ENCODE measurements at regions of chr15 and their contacts with region 1.

Region 1: DNA sequence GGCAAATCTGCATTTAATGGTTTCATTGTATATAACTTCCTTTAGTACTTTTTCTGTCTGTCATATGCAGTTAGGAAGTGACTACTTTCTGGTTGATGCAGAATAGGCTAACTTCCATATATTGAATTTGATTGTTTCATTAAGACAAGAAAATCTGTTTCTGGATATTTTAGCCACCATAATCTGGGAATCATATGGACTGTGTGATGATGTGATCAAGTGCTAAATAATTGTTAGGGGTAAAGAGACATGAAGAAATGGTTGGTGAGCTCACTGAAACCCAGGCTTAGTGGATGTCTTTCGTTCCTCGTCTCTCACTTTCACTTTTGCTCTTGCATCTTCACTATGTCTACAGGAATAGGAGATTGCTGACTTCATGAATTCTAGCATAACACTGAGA is 3.5 kb upstream of the MNS1 start:
- DNase-seq: no peak
- ATAC-seq: peak; percentile 56
- H3K4me3 Mint-ChIP-seq: peak overlapping the region; percentile 68
- H3K27ac Mint-ChIP-seq: peak overlapping the region; percentile 52
- H3K4me1 Mint-ChIP-seq: peaks cover 27% of the 10 kb centered on the region
- H3K27me3 Mint-ChIP-seq: peaks cover 23% of the 10 kb centered on the region

Region 2: GRCh38 chr15:56491110-56491722 is 22.8 kb after region 1 on chr15:
- CTCF ChIA-PET with region 1: interaction called, 11 read pairs
- DNase-seq: peak; percentile 73
- ATAC-seq: peak; percentile 64
- H3K4me3 Mint-ChIP-seq: no peak overlapping the region
- H3K27ac Mint-ChIP-seq: no peak overlapping the region
- H3K4me1 Mint-ChIP-seq: peaks cover 10% of the 10 kb centered on the region
- H3K27me3 Mint-ChIP-seq: peaks cover 6% of the 10 kb centered on the region

Measured in activated CD8-positive, alpha-beta memory T cell treated with anti-CD3 and anti-CD28 coated beads, Interleukin-2, amount 10 ng/mL, durations not matched to agents 7 days and 5 days (primary cell).